CD8-positive, alpha-beta T cell (primary cell): ENCODE measurements at regions of chr10 and their contacts with region 1.

Region 1: DNA sequence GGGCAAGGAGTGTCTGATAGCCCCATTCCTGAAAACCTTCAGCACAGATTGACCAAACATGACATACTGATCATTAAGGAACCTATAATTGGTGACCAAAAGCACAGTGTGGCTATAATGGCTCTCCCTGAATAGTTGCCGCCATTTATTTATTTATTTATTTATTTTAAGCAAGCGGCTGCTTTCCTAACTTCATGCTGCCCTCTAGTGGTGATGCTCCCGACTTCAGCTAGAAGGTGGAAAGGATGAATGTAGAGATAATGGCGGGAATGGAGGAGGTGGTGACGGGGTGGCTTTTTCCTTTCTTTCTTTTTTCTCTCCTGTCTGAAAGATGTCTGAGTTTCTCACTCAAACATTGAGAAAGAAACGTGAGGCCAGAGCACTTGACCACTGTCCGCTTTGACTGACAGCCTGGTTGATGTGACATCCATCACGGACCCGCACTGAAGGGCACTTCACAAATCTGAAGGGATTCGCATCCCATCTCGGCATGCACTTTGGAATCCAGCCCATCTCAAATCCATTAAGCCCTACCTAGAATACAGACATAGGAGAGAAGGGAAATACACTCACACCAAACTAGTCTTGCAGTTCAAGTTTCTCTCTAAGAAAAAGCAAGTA is 1090.1 kb downstream of the KCNMA1 start:
- DNase-seq: peak in 5 of 9 experiments; percentile 1 to 39 (median 30)
- ATAC-seq: no peak
- H3K4me3 ChIP-seq: no peak overlapping the region
- H3K4me3 Mint-ChIP-seq: no peak overlapping the region
- H3K27ac ChIP-seq: no peak overlapping the region
- H3K27ac Mint-ChIP-seq: no peak overlapping the region
- H3K4me1 ChIP-seq: no peaks in the 10 kb centered on the region
- H3K4me1 Mint-ChIP-seq: no peaks in the 10 kb centered on the region
- H3K27me3 ChIP-seq: no peaks in the 10 kb centered on the region
- H3K27me3 Mint-ChIP-seq: no peaks in the 10 kb centered on the region
- CTCF ChIP-seq: no peak

Region 2: GRCh38 chr10:76572021-76572420 is 24.6 kb after region 1 on chr10:
- CTCF ChIA-PET with region 1: no interaction called
- POLR2A ChIA-PET with region 1: no interaction called
- intact Hi-C with region 1: loop called in 1 of 2 experiments (anchors 2 kb)
- DNase-seq: no peak
- ATAC-seq: no peak
- H3K4me3 ChIP-seq: no peak overlapping the region
- H3K4me3 Mint-ChIP-seq: no peak overlapping the region
- H3K27ac ChIP-seq: no peak overlapping the region
- H3K27ac Mint-ChIP-seq: no peak overlapping the region
- H3K4me1 ChIP-seq: no peaks in the 10 kb centered on the region
- H3K4me1 Mint-ChIP-seq: no peaks in the 10 kb centered on the region
- H3K27me3 ChIP-seq: no peaks in the 10 kb centered on the region
- H3K27me3 Mint-ChIP-seq: no peaks in the 10 kb centered on the region
- CTCF ChIP-seq: no peak